Activated CD8-positive, alpha-beta T cell treated with anti-CD3 and anti-CD28 coated beads, Interleukin-2, amount 10 ng/mL, durations not matched to agents 7 days and 5 days (primary cell): ENCODE measurements at regions of chr7 and their contacts with region 1.

Region 1: GRCh38 chr7:150514748-150515222 is at the start of gene GIMAP7:
- DNase-seq: peak; percentile 84
- ATAC-seq: peak; percentile 82
- H3K4me3 Mint-ChIP-seq: peak within 1 kb of the TSS; percentile 97
- H3K27ac Mint-ChIP-seq: peak within 1 kb of the TSS; percentile 98
- H3K4me1 Mint-ChIP-seq: peaks cover 48% of the 10 kb centered on the region
- H3K27me3 Mint-ChIP-seq: no peaks in the 10 kb centered on the region
- total RNA-seq, gene GIMAP7: 134 TPM

Region 2: DNA sequence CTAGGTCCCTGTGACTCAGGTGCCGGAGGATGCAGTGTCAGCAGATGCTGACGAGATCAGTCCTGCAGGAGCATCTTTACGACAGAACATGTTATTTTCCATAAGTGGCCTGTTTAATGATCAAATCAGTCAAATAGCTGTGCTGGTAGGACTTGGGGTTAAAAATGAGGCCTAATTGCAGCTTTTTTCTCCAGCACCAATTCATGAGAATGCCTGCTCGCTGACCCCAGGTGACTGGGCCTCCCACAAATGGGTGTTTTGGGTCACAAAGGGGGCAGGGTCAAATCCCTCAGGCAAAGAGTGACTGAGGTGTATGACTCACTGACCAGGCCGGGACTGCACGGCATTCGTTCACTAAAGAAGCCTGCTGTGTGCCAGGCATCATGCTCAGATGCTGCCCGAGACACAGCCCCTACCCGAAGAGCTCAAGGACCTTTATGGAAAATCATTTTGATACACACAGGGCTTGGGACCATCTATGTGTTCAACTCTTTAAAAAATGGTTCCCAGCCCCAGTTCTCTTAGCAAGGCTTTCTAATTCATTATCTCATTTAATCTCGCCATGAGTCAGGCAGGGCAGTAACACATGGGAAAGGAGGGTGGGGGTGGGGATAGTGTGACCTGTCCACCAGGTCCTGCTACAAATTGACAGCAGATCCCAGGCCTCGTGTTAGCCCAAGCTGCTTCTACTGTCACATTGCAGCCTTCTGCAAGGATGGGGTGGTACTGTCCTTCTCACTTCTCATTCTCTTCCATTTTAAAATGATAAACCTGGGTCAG is 114.6 kb before region 1 on chr7:
- CTCF ChIA-PET with region 1: no interaction called
- POLR2A ChIA-PET with region 1: no interaction called
- DNase-seq: no peak
- ATAC-seq: no peak
- H3K4me3 Mint-ChIP-seq: no peak overlapping the region
- H3K27ac Mint-ChIP-seq: peak overlapping the region; percentile 25
- H3K4me1 Mint-ChIP-seq: peaks cover 27% of the 10 kb centered on the region
- H3K27me3 Mint-ChIP-seq: no peaks in the 10 kb centered on the region

Region 3: GRCh38 chr7:150487625-150488024 is 27.2 kb before region 1 on chr7:
- CTCF ChIA-PET with region 1: interaction called, 5 read pairs
- POLR2A ChIA-PET with region 1: interaction called, 38 read pairs
- DNase-seq: no peak
- ATAC-seq: no peak
- H3K4me3 Mint-ChIP-seq: no peak overlapping the region
- H3K27ac Mint-ChIP-seq: no peak overlapping the region
- H3K4me1 Mint-ChIP-seq: peaks cover 57% of the 10 kb centered on the region
- H3K27me3 Mint-ChIP-seq: no peaks in the 10 kb centered on the region

Region 4: DNA sequence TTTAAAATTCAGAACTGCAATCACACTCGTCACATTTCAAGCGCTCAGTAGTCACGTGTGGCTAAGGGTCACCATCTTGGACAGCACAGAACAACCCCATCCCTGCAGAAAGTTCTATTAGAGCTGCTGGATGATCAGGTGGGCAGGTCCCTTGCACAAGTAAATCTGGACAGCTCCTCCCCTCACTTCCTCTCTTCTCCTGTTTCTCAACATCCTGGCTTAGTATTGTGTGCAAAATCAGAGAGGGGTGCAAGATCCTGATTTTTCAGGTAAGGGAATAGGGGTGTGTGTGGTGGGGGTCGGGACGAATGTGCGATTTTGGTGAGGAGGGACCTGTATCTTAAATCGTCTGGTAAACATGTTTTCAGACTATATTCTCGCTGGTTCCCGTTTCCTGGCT is 52.4 kb after region 1 on chr7 and contains the start of gene GIMAP4:
- CTCF ChIA-PET with region 1: interaction called, 17 read pairs
- POLR2A ChIA-PET with region 1: interaction called, 35 read pairs
- DNase-seq: peak; percentile 59
- ATAC-seq: peak; percentile 61
- H3K4me3 Mint-ChIP-seq: peak within 1 kb of the TSS; percentile 88
- H3K27ac Mint-ChIP-seq: peak within 1 kb of the TSS; percentile 90
- H3K4me1 Mint-ChIP-seq: peaks cover 59% of the 10 kb centered on the region
- H3K27me3 Mint-ChIP-seq: no peaks in the 10 kb centered on the region
- total RNA-seq, gene GIMAP4: 174 to 186 TPM

Region 5: DNA sequence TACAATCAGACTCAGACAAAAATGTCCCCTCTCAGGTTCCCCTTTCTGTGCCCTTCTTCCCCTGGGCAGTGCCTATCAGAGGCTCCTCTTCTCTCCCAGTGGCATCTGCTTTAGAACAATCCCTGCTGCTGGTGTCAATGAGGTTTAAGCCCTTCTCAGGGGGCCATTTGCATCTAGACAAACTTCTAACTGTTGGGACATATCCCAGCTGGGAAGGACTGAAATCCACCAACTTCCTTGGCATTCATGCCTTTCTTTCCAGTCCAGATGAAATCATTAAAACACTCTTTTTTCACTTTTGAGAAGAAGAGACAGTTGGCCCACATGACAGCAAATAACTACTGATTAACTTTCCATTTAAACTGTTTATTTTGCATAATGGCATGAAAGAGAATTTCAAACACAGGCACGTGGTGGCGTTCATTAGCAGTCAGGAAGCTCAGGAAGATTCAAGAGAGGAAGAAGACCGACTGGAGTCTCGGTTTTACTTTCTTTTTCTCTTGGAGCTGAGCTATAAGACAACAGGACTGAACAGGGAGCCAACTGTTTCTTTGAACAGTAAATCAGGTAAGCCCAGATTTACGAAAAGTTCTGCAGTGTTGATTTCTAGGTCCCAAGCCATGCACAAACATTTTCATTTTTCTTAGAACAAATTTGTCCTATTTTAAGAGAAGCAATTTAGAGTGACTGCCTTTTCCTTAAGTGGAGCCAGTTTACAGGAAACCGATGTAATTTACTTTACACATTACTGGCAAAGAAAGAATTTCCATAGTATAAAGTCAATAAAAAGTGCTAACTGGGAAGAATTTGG is 170.6 kb after region 1 on chr7 and contains the start of gene GIMAP2:
- CTCF ChIA-PET with region 1: interaction called, 3 read pairs
- POLR2A ChIA-PET with region 1: interaction called, 12 read pairs
- DNase-seq: peak; percentile 50
- ATAC-seq: peak; percentile 89
- H3K4me3 Mint-ChIP-seq: peak within 1 kb of the TSS; percentile 95
- H3K27ac Mint-ChIP-seq: peak within 1 kb of the TSS; percentile 97
- H3K4me1 Mint-ChIP-seq: peaks cover 76% of the 10 kb centered on the region
- H3K27me3 Mint-ChIP-seq: no peaks in the 10 kb centered on the region
- total RNA-seq, gene GIMAP2: 79.0 to 82.9 TPM

Region 6: DNA sequence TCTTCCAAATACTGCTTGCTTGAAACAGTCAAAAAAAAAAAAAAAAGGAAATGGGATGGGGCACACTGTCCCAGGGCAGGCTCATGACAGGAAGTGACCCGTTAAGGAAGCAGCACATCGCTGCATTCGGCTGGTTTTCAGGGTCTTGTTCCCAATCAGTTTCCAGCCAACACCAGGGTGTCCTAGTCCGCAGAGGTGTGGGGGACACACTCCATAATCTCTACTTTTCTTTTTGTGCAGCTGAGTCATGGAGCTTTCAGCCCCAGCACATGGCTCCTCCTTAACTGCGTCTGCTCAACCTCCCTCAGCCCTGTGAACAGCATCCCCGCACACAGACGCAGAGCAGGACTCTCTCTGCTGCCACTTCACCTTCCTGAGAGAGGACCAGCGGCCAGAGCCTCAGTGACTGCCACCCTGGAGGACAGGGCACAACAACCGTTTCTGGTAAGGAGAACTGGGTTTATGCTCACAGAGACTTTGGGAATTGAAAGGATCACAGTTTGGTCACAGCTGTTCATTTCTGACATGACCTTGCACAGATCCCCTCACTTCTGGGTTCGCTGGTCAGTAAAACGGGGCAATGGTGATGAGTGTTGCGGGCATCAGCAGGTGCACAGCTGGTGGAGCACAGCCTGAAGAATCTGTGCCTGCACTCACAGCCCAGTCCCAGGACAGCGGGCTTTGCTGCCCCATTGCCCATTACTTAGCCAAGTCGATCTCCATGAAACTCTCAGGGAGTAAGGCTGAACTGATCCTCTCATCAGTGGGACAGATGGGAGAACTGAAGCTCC is 222.7 kb after region 1 on chr7 and contains the start of gene GIMAP5:
- CTCF ChIA-PET with region 1: interaction called, 4 read pairs
- POLR2A ChIA-PET with region 1: interaction called, 15 read pairs
- DNase-seq: peak; percentile 68
- ATAC-seq: peak; percentile 78
- H3K4me3 Mint-ChIP-seq: peak within 1 kb of the TSS; percentile 90
- H3K27ac Mint-ChIP-seq: peak within 1 kb of the TSS; percentile 89
- H3K4me1 Mint-ChIP-seq: peaks cover 79% of the 10 kb centered on the region
- H3K27me3 Mint-ChIP-seq: no peaks in the 10 kb centered on the region
- total RNA-seq, gene GIMAP5: 56.3 to 63.3 TPM